AG04449 (cell line): ENCODE measurements at regions of chr17 and their contacts with region 1.

Region 1: GRCh38 chr17:38498186-38498752 is 70.0 kb downstream of the ARHGAP23 start:
- DNase-seq: no peak
- H3K4me3 ChIP-seq: no peak overlapping the region
- CTCF ChIP-seq: no peak

Region 2: DNA sequence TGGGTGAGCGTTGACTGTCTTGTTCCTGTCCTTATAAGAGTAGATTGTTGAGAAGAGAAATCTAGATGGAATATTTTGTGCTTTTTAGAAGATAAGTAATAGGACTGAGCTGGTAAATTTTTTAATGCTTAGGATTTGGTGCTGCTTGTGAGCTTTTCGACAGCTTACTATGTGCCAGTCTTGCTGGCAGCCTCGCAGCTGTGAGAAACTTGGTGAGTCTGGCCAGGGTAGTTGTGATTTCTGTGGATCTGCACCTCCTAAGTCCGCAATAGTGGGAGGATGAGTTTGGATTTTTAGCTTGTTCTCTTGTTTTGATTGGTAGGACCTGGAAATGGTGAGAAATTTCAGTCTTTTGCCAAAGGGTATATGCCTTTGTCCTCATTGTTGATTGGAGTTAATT is 143.0 kb before region 1 on chr17:
- CTCF ChIA-PET with region 1: no interaction called
- POLR2A ChIA-PET with region 1: no interaction called
- DNase-seq: no peak
- H3K4me3 ChIP-seq: no peak overlapping the region
- CTCF ChIP-seq: no peak

Region 3: DNA sequence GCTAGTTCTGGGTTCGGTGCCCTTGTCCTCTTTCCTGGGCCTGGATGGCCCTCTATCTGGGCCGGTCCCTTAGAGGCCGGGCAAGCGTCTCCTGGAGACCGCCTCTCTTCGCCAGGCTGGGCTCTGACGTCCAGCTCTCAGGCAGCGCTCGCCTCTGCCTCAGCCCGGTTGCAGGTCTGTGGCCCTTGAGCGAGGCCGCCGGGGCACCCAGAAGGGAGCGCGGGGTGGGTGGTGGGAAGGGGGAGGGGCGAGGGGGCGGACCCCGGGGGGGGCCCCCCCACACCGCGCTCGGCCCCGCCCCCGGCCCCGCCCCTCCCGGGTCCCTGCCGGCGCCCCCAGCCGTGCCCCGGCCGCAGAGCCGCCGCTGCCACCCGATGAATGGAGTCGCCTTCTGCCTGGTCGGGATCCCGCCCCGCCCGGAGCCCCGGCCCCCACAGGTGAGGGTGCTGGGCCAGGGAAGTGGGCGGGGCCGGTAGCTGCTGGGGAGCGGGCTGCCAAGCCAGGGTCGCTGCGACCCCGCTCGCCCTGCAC is 70.1 kb before region 1 on chr17 and contains the start of gene ARHGAP23:
- CTCF ChIA-PET with region 1: interaction called, 27 read pairs
- POLR2A ChIA-PET with region 1: interaction called, 3 read pairs
- DNase-seq: no peak
- H3K4me3 ChIP-seq: peak within 1 kb of the TSS; percentile 74
- CTCF ChIP-seq: no peak